ENCODE measurements at regions of chr1 and their contacts with region 1.

Region 1: DNA sequence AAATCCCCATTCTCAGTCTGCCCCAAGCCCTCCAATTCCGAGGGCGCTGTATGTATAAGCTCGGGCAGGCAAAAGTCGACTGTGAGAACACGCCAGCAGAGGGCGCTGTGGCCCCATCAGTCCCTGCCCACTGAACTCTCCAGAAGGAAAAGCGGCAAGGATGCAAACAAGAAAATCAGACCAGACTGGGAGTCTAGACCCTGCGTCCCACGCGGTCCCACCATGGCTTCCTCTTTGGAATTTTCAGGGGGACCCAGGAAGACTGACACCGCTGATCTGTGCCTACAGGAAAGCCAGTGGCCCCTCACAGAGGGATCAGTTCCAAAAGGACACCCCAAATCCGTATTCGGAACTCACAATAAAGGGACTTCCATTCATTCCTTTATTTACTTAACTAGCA is 19.5 kb downstream of the TEX35 start:
- DNase-seq: peak; percentile 79
- ATAC-seq: peak; percentile 93
- H3K4me3 Mint-ChIP-seq: no peak overlapping the region
- H3K27ac Mint-ChIP-seq: no peak overlapping the region
- H3K4me1 Mint-ChIP-seq: peaks cover 6% of the 10 kb centered on the region
- H3K27me3 Mint-ChIP-seq: no peaks in the 10 kb centered on the region

Region 2: GRCh38 chr1:178486100-178487069 is 46.0 kb before region 1 on chr1:
- CTCF ChIA-PET with region 1: no interaction called
- POLR2A ChIA-PET with region 1: no interaction called
- DNase-seq: no peak
- ATAC-seq: no peak
- H3K4me3 Mint-ChIP-seq: no peak overlapping the region
- H3K27ac Mint-ChIP-seq: no peak overlapping the region
- H3K4me1 Mint-ChIP-seq: no peaks in the 10 kb centered on the region
- H3K27me3 Mint-ChIP-seq: no peaks in the 10 kb centered on the region

Region 3: DNA sequence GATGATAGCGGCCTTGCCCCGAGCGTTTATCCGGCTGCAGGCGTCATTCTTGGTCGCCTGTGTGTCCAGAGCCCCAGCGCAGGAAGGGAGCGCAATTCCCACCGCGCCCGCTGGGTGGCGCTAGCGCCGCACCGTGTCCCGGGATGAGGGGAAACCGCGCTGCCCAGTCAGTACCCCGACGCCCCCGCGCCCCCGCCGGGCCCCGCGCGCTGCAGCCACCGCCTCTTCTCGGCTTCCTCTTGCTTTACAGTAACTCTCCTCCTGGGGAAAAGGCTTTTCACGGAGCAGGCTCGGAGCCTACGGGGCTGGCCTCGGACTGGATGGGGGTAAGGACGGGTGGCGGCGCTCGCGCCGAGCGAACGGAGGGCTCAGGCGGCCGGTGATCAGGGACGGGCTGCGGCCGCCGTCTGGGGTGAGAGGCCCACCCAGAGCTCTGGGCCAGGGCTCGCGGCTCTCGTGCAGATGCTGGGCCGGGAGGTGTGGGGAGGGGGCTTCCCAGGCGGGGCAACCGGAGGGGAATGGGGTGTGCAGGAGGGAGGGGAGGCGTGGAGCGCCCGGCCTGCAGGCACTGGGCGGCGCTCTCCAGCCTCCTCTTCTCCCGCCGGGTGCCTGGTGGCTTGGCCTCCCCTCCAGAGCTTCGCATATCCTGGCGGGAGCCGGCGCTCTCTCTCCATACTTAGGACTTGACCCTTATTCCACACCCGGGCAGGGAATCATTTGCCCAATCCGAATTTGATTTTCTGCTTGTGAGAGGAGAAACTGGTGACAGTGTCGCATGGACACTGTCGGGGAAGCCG is 10.4 kb after region 1 on chr1:
- CTCF ChIA-PET with region 1: interaction called, 16 read pairs
- POLR2A ChIA-PET with region 1: no interaction called
- DNase-seq: peak; percentile 87
- ATAC-seq: peak; percentile 94
- H3K4me3 Mint-ChIP-seq: peak overlapping the region; percentile 86
- H3K27ac Mint-ChIP-seq: peak overlapping the region; percentile 91
- H3K4me1 Mint-ChIP-seq: peaks cover 4% of the 10 kb centered on the region
- H3K27me3 Mint-ChIP-seq: no peaks in the 10 kb centered on the region

Region 4: DNA sequence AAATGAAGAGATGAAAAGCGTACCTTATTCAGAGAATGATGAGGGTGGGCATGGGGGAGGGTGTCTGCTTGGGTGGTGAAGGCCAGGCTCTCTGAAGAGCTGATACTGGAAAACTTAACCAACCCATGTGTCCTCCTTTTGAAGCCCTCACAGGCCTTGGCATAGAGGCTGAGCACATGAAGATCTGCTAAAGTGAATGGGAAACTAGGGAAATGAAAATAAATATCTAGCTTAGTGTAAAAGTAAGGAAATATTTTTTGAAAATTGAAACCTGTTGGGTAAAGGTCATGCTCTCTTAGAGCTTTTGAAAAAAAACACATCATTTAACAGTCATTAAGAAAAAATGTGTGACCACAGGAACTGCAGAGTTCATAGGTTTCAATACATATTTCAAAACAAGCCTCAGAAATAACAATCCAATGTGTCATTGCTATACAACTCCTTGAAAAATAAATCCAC is 152.2 kb after region 1 on chr1:
- CTCF ChIA-PET with region 1: no interaction called
- POLR2A ChIA-PET with region 1: no interaction called
- DNase-seq: no peak
- ATAC-seq: no peak
- H3K4me3 Mint-ChIP-seq: no peak overlapping the region
- H3K27ac Mint-ChIP-seq: no peak overlapping the region
- H3K4me1 Mint-ChIP-seq: no peaks in the 10 kb centered on the region
- H3K27me3 Mint-ChIP-seq: no peaks in the 10 kb centered on the region

Region 5: GRCh38 chr1:178725603-178726517 is 193.5 kb after region 1 on chr1:
- CTCF ChIA-PET with region 1: interaction called, 10 read pairs
- POLR2A ChIA-PET with region 1: no interaction called
- DNase-seq: peak; percentile 74
- ATAC-seq: peak; percentile 73
- H3K4me3 Mint-ChIP-seq: peak overlapping the region; percentile 82
- H3K27ac Mint-ChIP-seq: peak overlapping the region; percentile 20
- H3K4me1 Mint-ChIP-seq: peaks cover 7% of the 10 kb centered on the region
- H3K27me3 Mint-ChIP-seq: peaks cover 15% of the 10 kb centered on the region

Region 6: GRCh38 chr1:178752891-178753290 is 220.5 kb after region 1 on chr1:
- CTCF ChIA-PET with region 1: interaction called, 11 read pairs
- POLR2A ChIA-PET with region 1: no interaction called
- DNase-seq: no peak
- ATAC-seq: no peak
- H3K4me3 Mint-ChIP-seq: no peak overlapping the region
- H3K27ac Mint-ChIP-seq: no peak overlapping the region
- H3K4me1 Mint-ChIP-seq: no peaks in the 10 kb centered on the region
- H3K27me3 Mint-ChIP-seq: no peaks in the 10 kb centered on the region

Measured in activated CD8-positive, alpha-beta T cell treated with anti-CD3 and anti-CD28 coated beads, Interleukin-2, amount 10 ng/mL, durations not matched to agents 7 days and 5 days (primary cell).